ENCODE measurements at regions of chr11 and their contacts with region 1.

Region 1: GRCh38 chr11:78239781-78240180 is 51.1 kb downstream of the USP35 start:
- DNase-seq: no peak
- CTCF ChIP-seq: no peak

Region 2: GRCh38 chr11:77865805-77866204 is 374.0 kb before region 1 on chr11:
- CTCF ChIA-PET with region 1: no interaction called
- POLR2A ChIA-PET with region 1: no interaction called
- DNase-seq: no peak
- CTCF ChIP-seq: no peak

Region 3: GRCh38 chr11:78216571-78217287 is 23.1 kb before region 1 on chr11:
- CTCF ChIA-PET with region 1: no interaction called
- POLR2A ChIA-PET with region 1: no interaction called
- DNase-seq: no peak
- CTCF ChIP-seq: no peak

Region 4: DNA sequence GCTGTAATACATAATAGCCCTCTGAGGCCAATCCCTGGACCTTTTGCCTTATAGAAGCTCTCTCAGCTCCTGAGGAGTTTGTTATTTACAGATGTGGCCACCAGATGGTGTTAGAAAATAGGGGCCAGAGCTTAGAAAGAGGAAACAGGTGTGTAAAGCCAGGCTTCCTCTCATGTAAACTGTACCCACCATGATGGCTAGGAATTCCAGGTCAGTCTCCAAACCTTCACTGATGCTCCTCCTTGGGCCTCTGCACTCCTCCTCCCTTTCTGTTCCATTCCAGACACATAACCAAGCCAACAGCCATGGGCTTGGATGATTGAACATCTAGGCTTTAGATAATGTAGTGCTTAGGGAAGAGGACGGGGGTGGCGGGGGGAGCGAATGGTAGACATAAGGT is 11.3 kb before region 1 on chr11:
- CTCF ChIA-PET with region 1: interaction called, 12 read pairs
- POLR2A ChIA-PET with region 1: no interaction called
- DNase-seq: peak; percentile 75
- CTCF ChIP-seq: peak; percentile 60

Measured in GM10248 (cell line).